GM18951 (cell line): ENCODE measurements at regions of chr12 and their contacts with region 1.

Region 1: DNA sequence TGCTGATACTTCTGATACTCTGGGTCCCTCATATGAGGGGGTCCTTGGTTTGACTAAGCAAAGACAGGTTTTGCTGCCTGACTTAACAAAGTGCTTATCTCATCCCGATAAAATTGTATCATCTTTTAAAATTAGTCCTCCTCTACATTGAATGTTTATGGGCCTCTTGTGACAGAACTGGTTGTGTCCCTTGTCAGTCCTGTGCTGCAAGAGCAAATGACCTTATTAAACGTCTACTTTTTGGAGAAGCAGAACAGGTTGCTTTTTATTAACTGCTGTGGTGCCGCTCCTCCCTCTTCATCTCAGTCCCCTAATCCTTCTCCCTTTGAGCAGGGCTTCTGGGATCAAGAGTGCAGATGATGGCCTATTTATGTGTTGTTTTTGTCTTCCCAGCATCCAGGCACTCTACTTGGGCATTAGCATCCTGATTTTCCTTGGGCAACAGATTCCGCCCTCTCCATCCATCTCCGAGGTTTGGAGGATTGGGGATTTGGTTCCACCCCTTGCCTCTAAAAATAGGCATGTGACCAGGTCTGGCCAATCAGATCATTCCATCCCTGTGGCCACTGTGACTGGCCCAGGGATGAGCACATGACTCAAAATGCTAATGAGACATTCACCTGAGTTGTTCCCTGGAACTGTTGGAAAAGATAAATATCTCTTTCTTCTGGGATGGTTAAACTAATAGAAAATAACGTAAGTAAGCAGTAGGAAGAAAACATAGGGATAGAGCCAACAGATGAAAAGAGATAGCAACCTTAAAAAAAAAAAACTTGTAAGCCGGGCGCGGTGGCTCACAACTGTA is 2.9 kb upstream of the DENR start:
- POLR2A ChIP-seq: no peak

Region 2: GRCh38 chr12:122499991-122500684 is 249.6 kb before region 1 on chr12:
- in situ Hi-C with region 1: loop called (anchors 10 kb)
- POLR2A ChIP-seq: no peak

Region 3: DNA sequence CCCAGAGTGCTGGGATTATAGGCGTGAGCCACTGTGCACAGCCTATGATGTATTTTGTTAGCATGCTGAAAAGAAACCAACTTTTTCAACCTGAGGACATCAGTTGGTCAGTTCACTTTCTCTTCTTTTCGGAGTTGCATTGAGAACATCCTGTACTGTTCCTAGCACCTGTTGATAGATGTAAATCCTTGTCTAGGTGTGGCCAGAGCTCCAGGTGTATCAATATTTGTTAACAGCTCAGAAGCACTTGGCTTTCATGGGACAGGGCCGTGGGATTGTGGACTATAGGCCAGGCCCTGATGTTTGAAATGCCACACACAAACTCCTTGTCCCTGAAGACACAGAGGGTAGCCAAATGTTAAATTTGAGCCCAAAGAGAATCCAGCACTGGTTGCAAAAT is 61.5 kb before region 1 on chr12:
- in situ Hi-C with region 1: no loop called
- POLR2A ChIP-seq: no peak